ENCODE measurements at regions of chr14 and their contacts with region 1.

Region 1: GRCh38 chr14:93906341-93907329 is 20.5 kb upstream of the FAM181A start:
- DNase-seq: peak; percentile 84
- ATAC-seq: peak; percentile 84
- H3K4me3 Mint-ChIP-seq: no peak overlapping the region
- H3K27ac Mint-ChIP-seq: no peak overlapping the region; the same call in 1 of the 2 replicates
- H3K4me1 Mint-ChIP-seq: peaks cover 20% of the 10 kb centered on the region
- H3K27me3 Mint-ChIP-seq: no peaks in the 10 kb centered on the region; the same call in 1 of the 2 replicates
- CTCF ChIP-seq: peak; percentile 72

Region 2: GRCh38 chr14:93655078-93655750 is 251.4 kb before region 1 on chr14:
- CTCF ChIA-PET with region 1: interaction called, 119 read pairs
- POLR2A ChIA-PET with region 1: interaction called, 3 read pairs
- DNase-seq: peak; percentile 17
- ATAC-seq: peak; percentile 80
- H3K4me3 Mint-ChIP-seq: no peak overlapping the region
- H3K27ac Mint-ChIP-seq: peak overlapping the region; percentile 75; the same call in 1 of the 2 replicates
- H3K4me1 Mint-ChIP-seq: peaks cover 14% of the 10 kb centered on the region
- H3K27me3 Mint-ChIP-seq: no peaks in the 10 kb centered on the region
- CTCF ChIP-seq: peak; percentile 51

Region 3: DNA sequence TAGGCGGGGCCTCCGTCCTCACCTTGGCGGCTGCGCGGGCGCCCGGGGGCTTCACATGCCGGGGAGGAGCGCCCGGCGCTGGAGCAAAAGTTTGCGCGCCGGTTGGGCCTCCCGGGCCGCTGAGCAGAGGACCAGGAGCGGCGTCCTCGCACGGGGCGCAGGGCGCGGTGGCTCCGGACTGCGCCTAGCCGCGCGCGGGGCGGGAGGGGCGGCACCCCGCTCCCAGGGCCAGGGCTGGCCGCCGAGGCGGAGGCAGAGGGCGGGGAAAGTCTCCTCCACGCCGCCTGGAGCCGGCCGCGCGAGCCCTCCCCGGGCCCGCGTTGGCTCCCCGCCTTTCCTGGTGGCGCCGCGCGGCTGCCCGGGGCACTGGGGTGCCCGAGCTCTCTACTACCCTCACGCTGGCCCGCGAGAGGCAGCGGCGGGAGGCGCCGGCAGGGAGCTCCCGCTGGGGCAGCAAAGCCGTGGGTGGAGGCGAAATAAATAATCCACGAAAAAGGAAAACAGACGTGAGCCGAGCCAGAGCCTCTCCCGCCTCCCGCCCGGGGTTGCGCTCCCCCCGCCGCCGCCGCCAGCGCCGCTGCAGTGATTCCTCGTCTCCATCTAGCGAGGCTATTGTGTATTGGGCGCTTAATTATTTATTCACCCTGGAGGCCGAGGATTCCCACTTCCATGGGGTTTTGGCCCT is 118.0 kb before region 1 on chr14:
- CTCF ChIA-PET with region 1: interaction called, 37 read pairs
- POLR2A ChIA-PET with region 1: no interaction called
- DNase-seq: peak; percentile 69
- ATAC-seq: peak; percentile 60
- H3K4me3 Mint-ChIP-seq: peak overlapping the region; percentile 89
- H3K27ac Mint-ChIP-seq: no peak overlapping the region
- H3K4me1 Mint-ChIP-seq: peaks cover 16% of the 10 kb centered on the region
- H3K27me3 Mint-ChIP-seq: peaks cover 52% of the 10 kb centered on the region
- CTCF ChIP-seq: no peak

Region 4: GRCh38 chr14:93824518-93825234 is 82.0 kb before region 1 on chr14:
- CTCF ChIA-PET with region 1: interaction called, 12 read pairs
- POLR2A ChIA-PET with region 1: no interaction called
- DNase-seq: no peak
- ATAC-seq: no peak
- H3K4me3 Mint-ChIP-seq: no peak overlapping the region
- H3K27ac Mint-ChIP-seq: no peak overlapping the region
- H3K4me1 Mint-ChIP-seq: no peaks in the 10 kb centered on the region
- H3K27me3 Mint-ChIP-seq: no peaks in the 10 kb centered on the region
- CTCF ChIP-seq: no peak

Region 5: GRCh38 chr14:93868165-93868564 is 38.5 kb before region 1 on chr14:
- CTCF ChIA-PET with region 1: interaction called, 12 read pairs
- POLR2A ChIA-PET with region 1: no interaction called
- DNase-seq: no peak
- ATAC-seq: no peak
- H3K4me3 Mint-ChIP-seq: no peak overlapping the region
- H3K27ac Mint-ChIP-seq: no peak overlapping the region
- H3K4me1 Mint-ChIP-seq: no peaks in the 10 kb centered on the region
- H3K27me3 Mint-ChIP-seq: peaks cover 10% of the 10 kb centered on the region
- CTCF ChIP-seq: no peak

Region 6: GRCh38 chr14:93926873-93927799 is 20.5 kb after region 1 on chr14 and contains the start of gene FAM181A:
- CTCF ChIA-PET with region 1: interaction called, 18 read pairs
- POLR2A ChIA-PET with region 1: no interaction called
- DNase-seq: no peak
- ATAC-seq: no peak
- H3K4me3 Mint-ChIP-seq: no peak within 1 kb of the TSS
- H3K27ac Mint-ChIP-seq: no peak within 1 kb of the TSS
- H3K4me1 Mint-ChIP-seq: peaks cover 6% of the 10 kb centered on the region; the same call in 1 of the 2 replicates
- H3K27me3 Mint-ChIP-seq: no peaks in the 10 kb centered on the region
- CTCF ChIP-seq: no peak
- total RNA-seq, gene FAM181A: not detected in 3 replicates

Region 7: DNA sequence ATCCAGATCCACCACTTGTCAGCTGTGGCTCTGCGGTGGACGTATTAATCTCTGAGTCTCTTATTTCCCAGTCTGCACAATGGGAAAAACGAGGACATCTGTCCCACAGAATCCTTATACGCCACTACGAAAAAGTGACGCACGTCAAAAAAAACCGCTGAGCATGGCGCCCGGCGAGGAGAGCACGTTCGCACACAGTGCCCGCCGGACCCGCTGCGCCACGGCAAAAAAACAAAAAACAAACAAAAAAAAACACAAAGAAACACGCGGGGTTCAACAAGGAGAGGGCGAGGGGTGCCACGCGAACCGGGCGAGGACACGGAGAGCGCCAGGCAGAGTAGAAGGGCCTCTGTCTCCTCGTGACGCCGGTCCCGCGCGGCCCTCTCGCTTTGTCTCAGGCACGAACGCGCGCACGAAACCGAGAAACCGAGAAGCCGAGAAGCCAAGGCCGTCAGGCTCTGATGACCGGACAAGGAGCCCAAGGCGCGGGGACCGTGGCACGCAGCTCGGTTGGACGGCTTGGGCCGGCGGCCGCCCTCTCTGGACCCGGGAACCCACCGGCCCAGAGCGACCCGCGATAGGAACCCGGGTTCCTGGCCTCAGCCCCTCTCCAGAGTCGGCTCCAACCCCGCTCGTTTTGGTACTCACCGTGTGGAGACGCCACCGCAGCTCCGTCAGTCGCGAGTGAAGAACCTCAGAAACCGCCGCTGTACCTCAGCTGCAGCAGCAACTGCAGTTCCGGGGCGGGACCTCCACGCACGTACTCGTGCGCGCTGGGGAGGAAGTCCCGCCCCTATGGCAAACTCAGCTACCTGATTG is 174.0 kb after region 1 on chr14 and contains the start of gene DDX24:
- CTCF ChIA-PET with region 1: no interaction called
- POLR2A ChIA-PET with region 1: no interaction called
- DNase-seq: peak; percentile 96
- ATAC-seq: peak; percentile 36
- H3K4me3 Mint-ChIP-seq: peak within 1 kb of the TSS; percentile 100
- H3K27ac Mint-ChIP-seq: peak within 1 kb of the TSS; percentile 93
- H3K4me1 Mint-ChIP-seq: peaks cover 29% of the 10 kb centered on the region
- H3K27me3 Mint-ChIP-seq: no peaks in the 10 kb centered on the region
- CTCF ChIP-seq: no peak
- total RNA-seq, gene DDX24: 137 to 174 TPM (median 140 TPM) in 3 replicates

Measured in WTC11 (cell line).